Astrocyte of the cerebellum (primary cell): ENCODE measurements at regions of chr12 and their contacts with region 1.

Region 1: DNA sequence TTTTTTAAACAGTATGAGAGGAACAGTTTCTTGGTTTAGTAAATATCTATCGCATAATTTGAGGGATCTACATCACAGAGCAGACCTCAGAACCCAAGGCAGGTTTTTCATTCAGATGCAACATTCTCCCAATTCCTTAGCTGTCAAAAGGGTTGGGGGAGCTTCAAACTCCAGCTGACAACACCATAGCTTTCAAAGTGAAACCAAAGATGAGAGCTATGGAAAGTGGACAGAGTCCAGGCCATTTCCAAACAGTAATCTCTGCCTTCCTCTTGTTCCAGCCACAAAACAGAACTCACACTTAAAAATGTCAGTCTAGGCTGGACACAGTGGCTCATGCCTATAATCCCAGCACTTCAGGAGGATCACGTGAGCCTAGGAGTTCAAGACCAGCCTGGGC is 87.8 kb downstream of the SPRING1 start:
- DNase-seq: no peak
- H3K4me3 ChIP-seq: no peak overlapping the region
- CTCF ChIP-seq: no peak

Region 2: GRCh38 chr12:116604951-116605641 is 45.0 kb before region 1 on chr12:
- in situ Hi-C with region 1: no loop called
- DNase-seq: no peak
- H3K4me3 ChIP-seq: no peak overlapping the region
- CTCF ChIP-seq: no peak

Region 3: DNA sequence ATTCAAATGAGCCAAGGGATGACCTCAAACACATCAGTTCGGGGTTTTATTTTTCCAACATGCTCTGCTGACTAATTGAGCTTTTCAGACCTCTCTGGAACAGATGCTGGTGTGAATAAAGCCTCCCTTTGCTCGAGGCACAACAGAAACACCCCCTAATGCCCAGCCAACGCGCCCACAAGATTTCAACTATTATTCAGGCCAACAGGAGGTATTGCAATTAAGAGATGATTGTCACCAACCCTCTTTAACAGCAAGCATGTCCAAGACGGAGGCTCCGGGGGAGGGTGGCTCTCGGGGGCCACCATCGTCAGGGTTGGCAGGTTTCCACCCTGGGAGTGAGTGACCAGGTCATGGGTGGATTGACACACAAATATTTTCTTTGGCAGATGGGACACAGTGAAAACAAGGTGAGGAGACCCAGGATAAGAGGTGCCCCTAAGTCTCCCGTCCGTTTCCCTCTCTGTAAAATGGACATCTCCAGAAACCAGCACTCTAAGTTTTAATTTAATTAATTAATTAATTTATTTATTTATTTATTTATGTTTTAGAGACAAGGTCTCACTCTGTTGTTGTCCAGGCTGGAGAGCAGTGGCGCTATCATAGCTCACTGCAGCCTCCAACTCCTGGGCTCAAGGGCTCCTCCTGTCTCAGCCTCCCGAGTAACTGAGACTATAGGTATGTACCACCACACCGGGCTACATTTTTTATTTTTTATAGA is 34.8 kb before region 1 on chr12:
- in situ Hi-C with region 1: loop called (anchors 5 kb)
- DNase-seq: no peak
- H3K4me3 ChIP-seq: no peak overlapping the region
- CTCF ChIP-seq: no peak

Region 4: DNA sequence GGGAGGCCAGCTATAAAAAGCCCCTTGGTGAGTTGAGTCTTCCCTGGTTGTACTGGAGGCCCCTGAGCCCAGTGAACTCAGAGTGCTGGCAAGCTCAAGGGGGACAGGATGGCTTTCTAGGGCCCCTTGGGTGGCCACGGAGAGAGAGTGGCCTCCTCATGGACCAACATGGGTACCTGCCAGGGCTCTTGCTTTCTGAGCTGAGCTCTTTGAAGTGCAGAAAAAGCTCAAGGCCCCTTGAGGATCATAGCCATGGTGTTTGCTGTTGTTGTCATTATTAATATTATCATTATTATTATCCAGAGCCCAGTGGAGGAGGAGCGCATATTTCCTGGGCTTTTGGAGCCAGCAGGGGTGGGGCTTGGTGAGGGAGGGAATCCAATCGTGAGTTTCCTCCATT is 94.7 kb after region 1 on chr12:
- in situ Hi-C with region 1: no loop called
- DNase-seq: no peak
- H3K4me3 ChIP-seq: no peak overlapping the region
- CTCF ChIP-seq: no peak